B cell (primary cell): ENCODE measurements at regions of chr9 and their contacts with region 1.

Region 1: DNA sequence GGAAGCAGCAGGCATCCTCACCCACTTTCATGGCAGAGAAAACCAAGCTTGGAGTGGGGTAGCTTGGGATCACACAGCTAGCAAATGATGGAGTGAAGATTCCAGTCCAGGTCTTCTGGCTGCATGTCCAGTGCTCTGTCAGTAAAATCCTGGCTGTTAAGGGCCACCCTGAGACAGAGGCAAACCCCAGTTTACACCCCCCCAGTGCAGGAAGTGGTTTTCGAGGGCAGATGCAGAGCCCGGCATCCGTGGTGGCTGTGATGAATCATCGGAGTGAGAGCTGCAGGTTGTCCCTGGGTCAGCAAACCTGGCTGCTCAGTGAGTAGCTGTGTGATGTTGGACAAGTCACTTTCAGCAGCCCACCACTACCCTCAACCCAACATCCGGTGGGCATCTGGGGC is 115.4 kb downstream of the RGS3 start:
- DNase-seq: peak; percentile 76
- ATAC-seq: peak; percentile 46
- H3K4me3 ChIP-seq: peak overlapping the region in 1 of 5 experiments; percentile 9
- H3K4me3 Mint-ChIP-seq: peak overlapping the region; percentile 86
- H3K27ac ChIP-seq: peak overlapping the region; percentile 71 to 85
- H3K27ac Mint-ChIP-seq: peak overlapping the region; percentile 96
- H3K4me1 ChIP-seq: peaks cover 51 to 69% of the 10 kb centered on the region in 2 donors
- H3K4me1 Mint-ChIP-seq: peaks cover 72% of the 10 kb centered on the region
- H3K27me3 ChIP-seq: peaks cover 0 to 2% (median 0%) of the 10 kb centered on the region in 4 experiments
- H3K27me3 Mint-ChIP-seq: no peaks in the 10 kb centered on the region
- CTCF ChIP-seq: no peak

Region 2: GRCh38 chr9:113309204-113309813 is 269.6 kb before region 1 on chr9:
- CTCF ChIA-PET with region 1: interaction called, 4 read pairs
- POLR2A ChIA-PET with region 1: no interaction called
- intact Hi-C with region 1: loop called (anchors 1 kb)
- DNase-seq: peak; percentile 39
- ATAC-seq: no peak
- H3K4me3 ChIP-seq: no peak overlapping the region
- H3K4me3 Mint-ChIP-seq: no peak overlapping the region
- H3K27ac ChIP-seq: no peak overlapping the region
- H3K27ac Mint-ChIP-seq: no peak overlapping the region
- H3K4me1 ChIP-seq: no peaks in the 10 kb centered on the region
- H3K4me1 Mint-ChIP-seq: no peaks in the 10 kb centered on the region
- H3K27me3 ChIP-seq: no peaks in the 10 kb centered on the region
- H3K27me3 Mint-ChIP-seq: peaks cover 4% of the 10 kb centered on the region
- CTCF ChIP-seq: peak; percentile 67

Region 3: DNA sequence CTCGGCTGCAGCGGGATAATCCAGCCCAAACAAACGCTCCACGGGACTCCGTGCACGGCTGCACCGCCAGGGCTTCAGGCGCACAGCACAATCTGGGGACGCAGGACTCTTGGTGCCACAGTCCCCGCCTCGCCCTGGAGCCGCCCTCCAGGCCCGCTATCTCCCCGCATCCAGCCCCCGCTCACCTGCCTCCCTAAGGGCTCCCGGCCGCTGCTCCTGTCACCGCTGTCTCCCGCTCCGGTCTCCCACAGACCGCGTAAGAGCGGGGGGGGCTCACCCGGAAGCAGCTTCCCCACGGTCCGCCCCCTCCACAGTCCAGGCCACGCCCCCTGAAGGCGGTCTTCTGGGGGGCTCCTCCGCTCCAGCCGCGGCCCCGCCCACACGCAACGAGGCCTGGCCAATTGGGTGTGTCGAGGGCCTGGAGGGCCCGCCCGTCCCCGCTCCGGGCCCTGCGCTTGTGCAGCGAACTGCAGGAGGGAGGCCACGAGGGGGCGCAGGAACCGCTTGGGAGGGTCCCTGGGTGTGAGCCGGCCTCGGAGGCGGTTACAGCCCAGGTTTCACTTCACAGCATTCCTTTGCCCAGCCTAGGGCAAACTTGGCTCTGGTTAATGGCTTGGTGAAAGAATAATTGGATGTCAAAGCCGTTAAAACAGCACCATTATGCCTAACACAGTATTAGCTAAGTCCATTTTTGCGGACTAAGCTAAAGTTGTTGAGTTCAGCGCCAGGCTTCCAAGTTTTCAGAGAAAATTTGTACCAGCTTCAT is 177.7 kb before region 1 on chr9 and contains the start of gene ALAD:
- CTCF ChIA-PET with region 1: interaction called, 98 read pairs
- POLR2A ChIA-PET with region 1: no interaction called
- intact Hi-C with region 1: loop called (anchors 1 kb)
- DNase-seq: peak; percentile 99
- ATAC-seq: peak; percentile 99
- H3K4me3 ChIP-seq: peak within 1 kb of the TSS; percentile 60 to 98 (median 82)
- H3K4me3 Mint-ChIP-seq: peak within 1 kb of the TSS; percentile 98
- H3K27ac ChIP-seq: peak within 1 kb of the TSS; percentile 18 to 73
- H3K27ac Mint-ChIP-seq: peak within 1 kb of the TSS; percentile 93
- H3K4me1 ChIP-seq: peaks cover 10 to 18% of the 10 kb centered on the region in 2 donors
- H3K4me1 Mint-ChIP-seq: peaks cover 28% of the 10 kb centered on the region
- H3K27me3 ChIP-seq: no peaks in the 10 kb centered on the region
- H3K27me3 Mint-ChIP-seq: no peaks in the 10 kb centered on the region
- CTCF ChIP-seq: peak; percentile 93
- total RNA-seq, gene ALAD: 39.8 and 40.1 TPM in 2 replicates

Region 4: DNA sequence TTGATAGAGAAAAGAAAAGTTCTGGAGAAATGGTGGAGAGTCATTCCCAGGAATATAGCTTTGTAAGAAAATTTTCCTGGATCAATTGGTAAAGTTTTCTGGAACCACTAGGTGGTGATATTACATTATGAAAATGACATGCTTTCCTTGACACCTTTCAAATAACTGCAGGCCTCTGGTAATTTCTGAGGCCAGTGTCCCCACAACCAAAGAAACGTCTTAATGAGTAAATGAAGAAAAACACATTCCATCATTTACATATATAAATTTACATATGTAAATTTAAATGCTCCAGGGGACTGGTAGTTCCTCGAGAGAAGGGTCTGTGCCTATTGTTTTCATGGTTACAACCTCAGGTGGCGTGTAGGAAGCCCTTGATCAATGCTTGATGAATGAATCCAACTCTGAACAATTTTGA is 132.6 kb before region 1 on chr9:
- CTCF ChIA-PET with region 1: interaction called, 91 read pairs
- POLR2A ChIA-PET with region 1: interaction called, 6 read pairs
- intact Hi-C with region 1: loop called (anchors 2 kb)
- DNase-seq: peak; percentile 58
- ATAC-seq: no peak
- H3K4me3 ChIP-seq: no peak overlapping the region
- H3K4me3 Mint-ChIP-seq: no peak overlapping the region
- H3K27ac ChIP-seq: no peak overlapping the region
- H3K27ac Mint-ChIP-seq: no peak overlapping the region
- H3K4me1 ChIP-seq: no peaks in the 10 kb centered on the region
- H3K4me1 Mint-ChIP-seq: no peaks in the 10 kb centered on the region
- H3K27me3 ChIP-seq: no peaks in the 10 kb centered on the region
- H3K27me3 Mint-ChIP-seq: no peaks in the 10 kb centered on the region
- CTCF ChIP-seq: peak; percentile 80

Region 5: GRCh38 chr9:113516840-113517577 is 61.9 kb before region 1 on chr9:
- CTCF ChIA-PET with region 1: interaction called, 14 read pairs
- POLR2A ChIA-PET with region 1: no interaction called
- intact Hi-C with region 1: no loop called
- DNase-seq: peak; percentile 65
- ATAC-seq: peak; percentile 86
- H3K4me3 ChIP-seq: peak overlapping the region in 2 of 5 experiments; percentile 1 to 28
- H3K4me3 Mint-ChIP-seq: peak overlapping the region; percentile 65
- H3K27ac ChIP-seq: peak overlapping the region; percentile 44 to 67
- H3K27ac Mint-ChIP-seq: peak overlapping the region; percentile 87
- H3K4me1 ChIP-seq: peaks cover 22 to 31% of the 10 kb centered on the region in 2 donors
- H3K4me1 Mint-ChIP-seq: peaks cover 35% of the 10 kb centered on the region
- H3K27me3 ChIP-seq: no peaks in the 10 kb centered on the region
- H3K27me3 Mint-ChIP-seq: no peaks in the 10 kb centered on the region
- CTCF ChIP-seq: no peak

Region 6: GRCh38 chr9:113591001-113591898 is 12.4 kb after region 1 on chr9:
- CTCF ChIA-PET with region 1: interaction called, 30 read pairs
- POLR2A ChIA-PET with region 1: interaction called, 3 read pairs
- intact Hi-C with region 1: no loop called
- DNase-seq: peak; percentile 75
- ATAC-seq: peak; percentile 67
- H3K4me3 ChIP-seq: no peak overlapping the region
- H3K4me3 Mint-ChIP-seq: no peak overlapping the region
- H3K27ac ChIP-seq: no peak overlapping the region
- H3K27ac Mint-ChIP-seq: no peak overlapping the region
- H3K4me1 ChIP-seq: peaks cover 12 to 17% of the 10 kb centered on the region in 2 donors
- H3K4me1 Mint-ChIP-seq: peaks cover 16% of the 10 kb centered on the region
- H3K27me3 ChIP-seq: no peaks in the 10 kb centered on the region
- H3K27me3 Mint-ChIP-seq: no peaks in the 10 kb centered on the region
- CTCF ChIP-seq: peak; percentile 85

Region 7: DNA sequence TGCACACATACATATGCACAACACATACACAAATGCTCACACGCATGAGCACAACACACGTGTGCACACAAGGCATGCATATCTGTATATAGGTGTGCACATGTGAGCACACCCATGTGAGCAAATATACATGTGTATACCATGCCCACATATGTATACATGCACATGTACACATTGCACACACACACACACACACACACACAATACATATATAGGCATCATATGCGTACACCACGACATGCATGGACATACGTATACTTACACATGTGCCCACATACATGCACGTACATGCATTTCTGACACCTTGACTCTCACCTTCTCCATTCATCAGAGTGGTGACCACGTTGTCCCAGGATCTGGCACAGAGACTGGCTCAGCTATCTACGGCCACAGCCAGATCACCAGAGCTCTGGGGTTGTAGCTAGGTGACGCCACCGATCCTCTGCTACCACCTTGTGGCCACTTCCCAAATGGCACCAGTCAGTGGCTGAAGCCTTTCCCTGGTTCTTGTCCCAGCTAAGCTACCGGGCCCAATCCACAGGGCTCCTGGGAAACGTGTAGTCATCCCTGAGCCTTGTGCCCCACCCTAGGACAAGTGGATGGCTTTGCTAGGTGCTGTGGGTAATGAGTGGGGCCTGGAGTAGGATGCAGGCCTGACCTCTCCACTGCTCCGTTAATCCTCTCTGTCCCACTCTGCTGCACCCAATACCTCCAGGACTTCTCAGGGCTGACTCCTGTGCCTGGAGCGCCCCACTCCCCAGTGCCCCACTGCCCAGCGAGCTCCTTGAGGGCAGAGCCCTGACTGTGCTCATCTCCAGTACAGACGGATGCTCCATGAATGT is 79.0 kb after region 1 on chr9:
- CTCF ChIA-PET with region 1: interaction called, 136 read pairs
- POLR2A ChIA-PET with region 1: interaction called, 4 read pairs
- intact Hi-C with region 1: no loop called
- DNase-seq: peak; percentile 86
- ATAC-seq: peak; percentile 93
- H3K4me3 ChIP-seq: no peak overlapping the region
- H3K4me3 Mint-ChIP-seq: no peak overlapping the region
- H3K27ac ChIP-seq: no peak overlapping the region
- H3K27ac Mint-ChIP-seq: peak overlapping the region; percentile 71
- H3K4me1 ChIP-seq: no peaks in the 10 kb centered on the region
- H3K4me1 Mint-ChIP-seq: no peaks in the 10 kb centered on the region
- H3K27me3 ChIP-seq: peaks cover 0 to 17% (median 7%) of the 10 kb centered on the region in 4 experiments
- H3K27me3 Mint-ChIP-seq: peaks cover 34% of the 10 kb centered on the region
- CTCF ChIP-seq: peak; percentile 92